ENCODE measurements at regions of chr7 and their contacts with region 1.

Region 1: DNA sequence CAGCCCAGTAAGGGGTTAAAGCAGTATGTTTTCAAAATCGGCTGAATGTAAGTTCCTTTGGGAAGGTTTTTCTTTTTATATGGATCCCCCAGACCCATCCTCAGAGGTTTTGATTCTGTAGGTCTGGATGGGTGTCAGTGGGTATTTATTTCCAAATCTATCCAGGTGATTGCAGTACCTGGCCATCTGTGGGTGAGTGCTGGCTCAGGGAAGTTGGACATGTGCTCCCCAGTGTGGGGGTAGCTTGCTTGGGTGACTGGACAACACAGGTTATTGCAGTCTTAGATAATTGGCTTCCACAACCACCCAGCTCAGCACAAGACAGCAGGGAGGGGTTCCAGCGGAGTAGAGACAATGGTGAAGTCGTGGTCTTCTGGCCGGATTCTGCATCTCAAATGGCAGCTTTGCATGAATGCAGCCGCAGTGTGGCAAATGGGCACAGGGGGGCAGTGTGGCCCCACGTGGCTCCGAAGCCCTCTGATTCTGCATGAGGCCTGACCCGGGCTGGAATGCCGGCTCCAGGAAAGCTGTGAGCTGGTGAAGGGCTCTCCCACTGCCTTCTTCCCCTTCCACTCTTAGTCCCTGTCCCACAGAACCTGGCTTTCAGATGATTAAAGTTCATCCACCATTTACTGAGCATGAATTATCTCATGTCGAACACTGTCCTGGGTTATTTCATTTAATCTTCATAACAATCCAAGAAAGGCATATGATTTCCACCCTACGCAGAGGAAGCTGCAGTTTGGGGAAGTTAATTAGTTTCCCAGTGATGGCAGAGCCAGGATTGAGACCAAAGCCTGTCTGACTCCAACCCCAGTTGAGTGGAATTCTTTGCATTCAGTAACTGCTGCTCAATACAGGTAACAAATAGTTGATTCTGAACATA is 64.5 kb upstream of the SYPL1 start:
- DNase-seq: peak; percentile 86
- ATAC-seq: peak; percentile 89 to 90
- H3K4me3 ChIP-seq: no peak overlapping the region
- H3K27ac ChIP-seq: peak overlapping the region; percentile 37
- H3K4me1 ChIP-seq: peaks cover 25% of the 10 kb centered on the region
- H3K27me3 ChIP-seq: no peaks in the 10 kb centered on the region
- CTCF ChIP-seq: peak; percentile 93

Region 2: DNA sequence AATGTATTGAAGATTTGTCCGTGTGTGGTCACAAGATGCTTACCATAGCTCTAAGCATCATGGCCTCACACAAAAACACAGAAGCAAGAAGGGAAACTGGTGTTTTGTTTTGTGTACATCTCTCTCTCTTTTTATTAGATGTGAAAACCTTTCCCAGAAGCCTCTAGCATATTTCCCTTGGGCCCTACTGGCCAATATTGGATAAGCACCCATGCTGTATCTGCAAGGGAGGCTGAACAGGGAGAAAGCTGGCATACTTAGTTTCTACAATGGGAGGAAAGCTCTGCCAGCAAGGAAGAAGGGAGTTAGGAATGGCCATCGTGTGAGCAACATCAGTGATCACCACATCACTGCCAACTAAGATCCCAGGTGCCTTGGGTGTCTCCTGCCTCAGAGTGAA is 117.7 kb after region 1 on chr7:
- intact Hi-C with region 1: no loop called
- DNase-seq: no peak
- ATAC-seq: no peak
- H3K4me3 ChIP-seq: no peak overlapping the region
- H3K27ac ChIP-seq: no peak overlapping the region
- H3K4me1 ChIP-seq: no peaks in the 10 kb centered on the region
- H3K27me3 ChIP-seq: no peaks in the 10 kb centered on the region
- CTCF ChIP-seq: no peak

Region 3: DNA sequence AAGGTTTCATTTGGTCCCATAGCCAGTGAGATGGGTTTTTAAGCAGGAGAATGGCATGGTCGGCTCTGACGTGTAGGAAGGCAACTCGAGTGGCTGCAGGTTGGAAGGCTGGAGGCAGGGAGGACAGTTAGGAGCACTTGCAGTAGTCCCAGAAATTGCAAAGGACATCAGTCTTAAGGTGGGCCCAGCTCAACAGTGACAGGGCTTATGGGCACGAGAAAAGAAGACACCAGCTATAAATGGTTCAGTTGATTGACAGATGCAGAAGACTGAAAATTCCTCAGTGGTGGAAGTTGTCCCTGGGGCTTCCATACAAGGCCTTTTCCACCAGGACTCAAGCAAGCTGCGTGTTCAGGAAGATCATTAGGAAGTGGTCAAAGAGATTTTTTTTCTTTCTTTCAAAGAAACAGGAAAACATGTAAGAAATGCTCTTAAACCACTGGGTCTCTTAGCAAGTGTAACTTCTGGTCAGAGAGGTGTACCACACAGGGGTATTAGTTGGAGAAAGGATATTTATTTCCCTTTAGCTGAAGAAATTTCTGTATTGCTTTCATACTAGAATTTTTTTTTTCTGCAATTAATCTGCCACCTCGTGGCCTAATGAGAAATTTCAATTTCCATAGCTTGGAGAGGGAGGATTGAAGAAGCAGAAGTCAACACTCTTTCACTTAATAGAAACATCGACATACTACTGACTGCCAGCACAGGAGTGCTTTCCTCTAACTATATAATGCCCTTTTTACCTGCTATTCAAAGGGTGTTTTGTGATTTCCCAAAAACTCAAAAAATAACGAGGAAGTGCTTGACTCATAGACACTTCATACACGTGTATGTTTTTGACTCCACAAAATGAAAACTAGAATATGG is 285.6 kb after region 1 on chr7:
- intact Hi-C with region 1: loop called (anchors 5 kb)
- DNase-seq: no peak
- ATAC-seq: peak; percentile 41 to 74
- H3K4me3 ChIP-seq: no peak overlapping the region
- H3K27ac ChIP-seq: no peak overlapping the region
- H3K4me1 ChIP-seq: peaks cover 19% of the 10 kb centered on the region
- H3K27me3 ChIP-seq: no peaks in the 10 kb centered on the region
- CTCF ChIP-seq: peak; percentile 68